Activated naive CD4-positive, alpha-beta T cell treated with anti-CD3 and anti-CD28 coated beads for 36 hours (primary cell): ENCODE measurements at regions of chr11 and their contacts with region 1.

Region 1: GRCh38 chr11:14907411-14908213 is 15.6 kb upstream of the CYP2R1 start:
- DNase-seq: peak; percentile 94
- H3K4me3 Mint-ChIP-seq: no peak overlapping the region
- H3K27ac Mint-ChIP-seq: no peak overlapping the region
- H3K4me1 Mint-ChIP-seq: peaks cover 39% of the 10 kb centered on the region
- H3K27me3 Mint-ChIP-seq: no peaks in the 10 kb centered on the region

Region 2: DNA sequence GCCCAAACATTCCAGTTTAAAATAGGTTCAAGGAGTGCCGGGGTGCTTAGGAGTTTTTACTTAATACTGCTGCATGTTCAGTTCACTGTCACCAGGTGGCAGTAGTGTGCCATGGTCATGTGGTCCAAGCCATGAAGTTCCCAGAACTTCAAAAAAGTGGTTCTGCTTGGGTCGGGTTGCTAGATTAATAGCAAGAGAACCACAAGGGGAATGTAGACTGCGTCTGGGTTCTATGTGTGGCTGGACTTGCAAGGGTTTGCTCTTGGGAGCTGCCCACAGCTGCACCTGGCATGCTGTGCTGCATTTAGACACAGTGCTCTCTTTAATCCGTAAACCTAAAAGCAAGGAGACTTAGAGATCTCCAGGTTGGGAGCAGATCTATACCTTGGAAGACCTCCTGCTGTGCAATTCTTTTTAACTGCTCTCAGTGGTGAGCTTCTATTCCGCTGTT is 951.6 kb before region 1 on chr11:
- CTCF ChIA-PET with region 1: no interaction called
- intact Hi-C with region 1: loop called (anchors 5 kb)
- DNase-seq: peak; percentile 71
- H3K4me3 Mint-ChIP-seq: no peak overlapping the region
- H3K27ac Mint-ChIP-seq: no peak overlapping the region
- H3K4me1 Mint-ChIP-seq: no peaks in the 10 kb centered on the region
- H3K27me3 Mint-ChIP-seq: peaks cover 5% of the 10 kb centered on the region

Region 3: DNA sequence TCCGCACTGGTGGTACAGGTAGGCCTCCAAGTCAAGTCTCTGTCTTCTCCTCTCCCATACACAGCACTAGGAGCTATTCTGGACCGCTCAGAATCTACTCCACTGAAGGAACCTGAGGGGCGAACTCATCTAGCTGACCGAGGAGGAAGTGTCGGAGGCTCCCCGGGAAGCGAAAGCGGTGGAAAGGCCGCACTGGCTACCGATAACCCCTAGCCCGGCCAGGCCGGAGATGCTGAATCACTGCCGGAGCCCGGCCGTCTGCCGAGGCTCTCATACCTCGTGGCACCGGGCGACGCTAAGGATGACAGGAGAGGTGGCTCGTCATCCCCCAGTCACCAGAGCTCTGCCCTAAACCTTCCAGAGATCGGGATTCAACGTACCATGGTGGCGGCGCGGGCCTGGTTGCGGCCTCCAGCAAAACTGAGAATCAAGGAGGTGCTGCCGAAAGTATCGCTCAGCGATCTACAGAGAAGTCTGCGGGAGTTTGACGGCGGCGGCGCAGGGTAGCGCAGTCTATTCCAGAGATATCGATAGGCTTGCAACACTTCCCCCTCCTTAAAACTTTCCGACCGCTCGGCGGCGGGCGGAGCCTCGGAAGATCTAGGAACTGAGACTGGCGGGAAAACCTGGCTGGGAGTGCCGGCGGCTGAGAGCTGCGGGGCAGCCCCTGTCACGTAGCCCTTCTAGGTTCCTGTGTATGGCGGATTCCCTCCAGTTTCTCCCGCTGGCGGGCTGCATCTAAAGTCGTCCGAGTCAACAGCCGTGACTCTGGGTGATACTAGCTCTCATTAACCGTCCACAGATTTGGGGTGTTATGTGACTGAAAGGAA is 387.5 kb before region 1 on chr11 and contains the start of gene PSMA1:
- CTCF ChIA-PET with region 1: interaction called, 36 read pairs
- intact Hi-C with region 1: loop called (anchors 1 kb)
- DNase-seq: peak; percentile 98
- H3K4me3 Mint-ChIP-seq: peak within 1 kb of the TSS; percentile 96
- H3K27ac Mint-ChIP-seq: peak within 1 kb of the TSS; percentile 97
- H3K4me1 Mint-ChIP-seq: peaks cover 24% of the 10 kb centered on the region
- H3K27me3 Mint-ChIP-seq: no peaks in the 10 kb centered on the region
- total RNA-seq, gene PSMA1: 367 to 375 TPM

Region 4: GRCh38 chr11:14643697-14644225 is 263.9 kb before region 1 on chr11 and contains the start of gene PDE3B:
- CTCF ChIA-PET with region 1: interaction called, 39 read pairs
- intact Hi-C with region 1: loop called (anchors 1 kb)
- DNase-seq: peak; percentile 85
- H3K4me3 Mint-ChIP-seq: peak within 1 kb of the TSS; percentile 81
- H3K27ac Mint-ChIP-seq: peak within 1 kb of the TSS; percentile 91
- H3K4me1 Mint-ChIP-seq: peaks cover 45% of the 10 kb centered on the region
- H3K27me3 Mint-ChIP-seq: no peaks in the 10 kb centered on the region
- total RNA-seq, gene PDE3B: 16.5 to 17.4 TPM

Region 5: GRCh38 chr11:14809466-14809865 is 98.1 kb before region 1 on chr11:
- CTCF ChIA-PET with region 1: interaction called, 15 read pairs
- intact Hi-C with region 1: no loop called
- DNase-seq: no peak
- H3K4me3 Mint-ChIP-seq: no peak overlapping the region
- H3K27ac Mint-ChIP-seq: no peak overlapping the region
- H3K4me1 Mint-ChIP-seq: peaks cover 2% of the 10 kb centered on the region
- H3K27me3 Mint-ChIP-seq: no peaks in the 10 kb centered on the region

Region 6: GRCh38 chr11:14949437-14950147 is 42.0 kb after region 1 on chr11:
- CTCF ChIA-PET with region 1: interaction called, 14 read pairs
- intact Hi-C with region 1: no loop called
- DNase-seq: no peak
- H3K4me3 Mint-ChIP-seq: no peak overlapping the region
- H3K27ac Mint-ChIP-seq: no peak overlapping the region
- H3K4me1 Mint-ChIP-seq: no peaks in the 10 kb centered on the region
- H3K27me3 Mint-ChIP-seq: no peaks in the 10 kb centered on the region

Region 7: DNA sequence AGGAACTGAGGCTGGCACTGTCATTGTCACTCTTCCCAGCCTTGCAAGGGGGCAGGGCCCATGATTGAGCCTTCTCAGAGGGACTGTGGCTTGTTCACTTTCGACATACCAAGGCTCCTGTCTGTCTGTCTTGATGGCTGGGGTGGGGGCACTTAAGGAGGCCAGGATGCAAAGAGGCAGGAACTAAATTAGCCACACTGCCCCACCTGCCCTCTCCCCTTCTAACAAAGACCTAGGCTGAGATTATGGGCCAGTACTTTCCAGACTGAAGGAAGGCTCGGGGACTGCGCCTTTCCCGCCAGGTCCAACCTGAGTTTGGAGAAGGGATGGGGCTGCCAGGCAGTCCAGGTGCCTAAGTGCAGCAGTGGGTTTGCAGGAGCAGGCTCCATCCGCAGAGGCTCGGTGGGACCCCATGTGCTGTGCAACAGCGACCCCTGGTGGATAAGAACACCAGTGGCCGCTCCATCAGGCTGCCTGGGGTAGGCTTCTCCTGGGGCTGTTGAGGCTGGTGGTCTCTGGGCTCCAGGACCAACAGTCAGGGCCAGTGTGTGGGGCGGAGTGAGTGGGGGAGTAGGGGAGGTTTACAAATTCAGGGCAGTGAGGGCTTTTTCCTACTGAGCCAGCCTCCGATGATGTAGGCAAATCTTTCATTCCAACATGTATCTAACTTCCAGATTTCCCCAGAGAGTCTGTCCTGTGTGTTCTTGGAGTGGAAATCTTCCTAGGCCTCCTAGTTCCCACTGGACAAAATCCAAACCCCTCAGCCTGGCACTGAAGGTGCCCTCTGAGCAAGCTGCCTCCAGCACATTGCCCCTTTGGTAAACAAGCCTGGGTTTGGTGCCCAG is 301.0 kb after region 1 on chr11:
- CTCF ChIA-PET with region 1: interaction called, 20 read pairs
- intact Hi-C with region 1: loop called (anchors 1 kb)
- DNase-seq: peak; percentile 84
- H3K4me3 Mint-ChIP-seq: no peak overlapping the region
- H3K27ac Mint-ChIP-seq: no peak overlapping the region
- H3K4me1 Mint-ChIP-seq: no peaks in the 10 kb centered on the region
- H3K27me3 Mint-ChIP-seq: no peaks in the 10 kb centered on the region